Activated CD4-positive, alpha-beta T cell treated with anti-CD3 and anti-CD28 coated beads for 36 hours (primary cell): ENCODE measurements at regions of chr1 and their contacts with region 1.

Region 1: DNA sequence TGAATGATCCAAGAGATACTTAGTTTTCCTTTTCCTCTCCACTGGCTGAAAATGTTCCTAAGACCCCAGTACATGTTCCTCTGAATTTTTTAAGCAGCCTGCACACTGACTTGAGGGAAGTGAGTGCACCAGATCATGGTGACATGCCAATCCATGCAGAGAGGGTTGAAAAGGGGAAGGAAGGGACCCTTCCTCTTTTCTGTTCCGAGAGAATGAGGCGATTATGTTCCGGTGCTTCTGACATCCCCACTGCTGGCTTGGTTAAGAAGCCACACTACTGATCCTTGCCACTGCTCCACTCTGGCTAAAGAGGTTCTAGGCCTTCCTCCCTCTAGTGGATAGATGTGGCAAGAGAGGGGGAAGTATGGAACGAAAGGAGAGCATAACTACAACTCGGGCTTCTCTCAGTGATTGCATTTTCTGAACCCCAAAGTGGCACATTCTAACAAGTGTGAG is 1.8 kb upstream of the CYB5R1 start:
- DNase-seq: peak; percentile 51
- ATAC-seq: peak; percentile 65
- H3K4me3 Mint-ChIP-seq: no peak overlapping the region
- H3K27ac Mint-ChIP-seq: peak overlapping the region; percentile 16
- H3K4me1 Mint-ChIP-seq: peaks cover 27% of the 10 kb centered on the region
- H3K27me3 Mint-ChIP-seq: no peaks in the 10 kb centered on the region

Region 2: GRCh38 chr1:201955009-201955728 is 1013.7 kb before region 1 on chr1 and contains the start of gene TIMM17A:
- CTCF ChIA-PET with region 1: no interaction called
- POLR2A ChIA-PET with region 1: no interaction called
- intact Hi-C with region 1: loop called in 1 of 2 experiments (anchors 2 kb)
- DNase-seq: peak; percentile 97
- ATAC-seq: peak; percentile 100
- H3K4me3 Mint-ChIP-seq: peak within 1 kb of the TSS; percentile 99
- H3K27ac Mint-ChIP-seq: peak within 1 kb of the TSS; percentile 97
- H3K4me1 Mint-ChIP-seq: peaks cover 16% of the 10 kb centered on the region
- H3K27me3 Mint-ChIP-seq: no peaks in the 10 kb centered on the region
- total RNA-seq, gene TIMM17A: 51.9 to 70.6 TPM

Region 3: DNA sequence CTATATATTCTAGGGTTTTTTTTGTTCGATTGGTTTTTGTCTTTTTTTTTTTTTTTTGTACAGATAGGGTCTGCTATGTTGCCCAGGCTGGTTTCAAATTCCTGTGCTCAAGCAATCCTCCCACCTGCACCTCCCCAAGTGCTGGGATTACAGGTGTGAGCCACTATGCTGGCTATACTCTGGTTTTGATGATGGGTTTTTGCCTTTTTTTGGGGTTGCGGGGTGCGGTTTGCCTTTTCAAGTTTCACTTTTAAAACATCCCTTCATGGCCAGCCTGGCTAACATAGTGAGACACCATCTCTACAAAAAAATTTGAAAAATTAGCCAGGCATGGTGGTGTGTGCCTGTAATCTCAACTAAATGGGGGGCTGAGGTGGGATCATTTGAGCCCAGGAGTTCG is 170.6 kb before region 1 on chr1:
- CTCF ChIA-PET with region 1: no interaction called
- POLR2A ChIA-PET with region 1: no interaction called
- intact Hi-C with region 1: no loop called
- DNase-seq: peak; percentile 24
- ATAC-seq: peak; percentile 47
- H3K4me3 Mint-ChIP-seq: no peak overlapping the region
- H3K27ac Mint-ChIP-seq: no peak overlapping the region
- H3K4me1 Mint-ChIP-seq: peaks cover 46% of the 10 kb centered on the region
- H3K27me3 Mint-ChIP-seq: no peaks in the 10 kb centered on the region

Region 4: GRCh38 chr1:202888531-202889360 is 80.1 kb before region 1 on chr1 and contains the start of gene RABIF:
- CTCF ChIA-PET with region 1: interaction called, 8 read pairs
- POLR2A ChIA-PET with region 1: no interaction called
- intact Hi-C with region 1: loop called in 1 of 2 experiments (anchors 1 kb)
- DNase-seq: peak; percentile 98
- ATAC-seq: peak; percentile 94
- H3K4me3 Mint-ChIP-seq: peak within 1 kb of the TSS; percentile 91
- H3K27ac Mint-ChIP-seq: peak within 1 kb of the TSS; percentile 96
- H3K4me1 Mint-ChIP-seq: peaks cover 15% of the 10 kb centered on the region
- H3K27me3 Mint-ChIP-seq: no peaks in the 10 kb centered on the region
- total RNA-seq, gene RABIF: 6.8 to 7.4 TPM

Region 5: GRCh38 chr1:202941372-202941771 is 27.5 kb before region 1 on chr1:
- CTCF ChIA-PET with region 1: no interaction called
- POLR2A ChIA-PET with region 1: interaction called, 13 read pairs
- intact Hi-C with region 1: no loop called
- DNase-seq: no peak
- ATAC-seq: no peak
- H3K4me3 Mint-ChIP-seq: no peak overlapping the region
- H3K27ac Mint-ChIP-seq: no peak overlapping the region
- H3K4me1 Mint-ChIP-seq: no peaks in the 10 kb centered on the region
- H3K27me3 Mint-ChIP-seq: no peaks in the 10 kb centered on the region

Region 6: GRCh38 chr1:202957733-202958543 is 10.9 kb before region 1 on chr1 and contains the start of gene ADIPOR1:
- CTCF ChIA-PET with region 1: interaction called, 4 read pairs
- POLR2A ChIA-PET with region 1: no interaction called
- intact Hi-C with region 1: loop called (anchors 1 kb)
- DNase-seq: peak; percentile 96
- ATAC-seq: peak; percentile 100
- H3K4me3 Mint-ChIP-seq: peak within 1 kb of the TSS; percentile 83
- H3K27ac Mint-ChIP-seq: peak within 1 kb of the TSS; percentile 82
- H3K4me1 Mint-ChIP-seq: peaks cover 46% of the 10 kb centered on the region
- H3K27me3 Mint-ChIP-seq: no peaks in the 10 kb centered on the region
- total RNA-seq, gene ADIPOR1: 65.4 to 85.1 TPM

Region 7: DNA sequence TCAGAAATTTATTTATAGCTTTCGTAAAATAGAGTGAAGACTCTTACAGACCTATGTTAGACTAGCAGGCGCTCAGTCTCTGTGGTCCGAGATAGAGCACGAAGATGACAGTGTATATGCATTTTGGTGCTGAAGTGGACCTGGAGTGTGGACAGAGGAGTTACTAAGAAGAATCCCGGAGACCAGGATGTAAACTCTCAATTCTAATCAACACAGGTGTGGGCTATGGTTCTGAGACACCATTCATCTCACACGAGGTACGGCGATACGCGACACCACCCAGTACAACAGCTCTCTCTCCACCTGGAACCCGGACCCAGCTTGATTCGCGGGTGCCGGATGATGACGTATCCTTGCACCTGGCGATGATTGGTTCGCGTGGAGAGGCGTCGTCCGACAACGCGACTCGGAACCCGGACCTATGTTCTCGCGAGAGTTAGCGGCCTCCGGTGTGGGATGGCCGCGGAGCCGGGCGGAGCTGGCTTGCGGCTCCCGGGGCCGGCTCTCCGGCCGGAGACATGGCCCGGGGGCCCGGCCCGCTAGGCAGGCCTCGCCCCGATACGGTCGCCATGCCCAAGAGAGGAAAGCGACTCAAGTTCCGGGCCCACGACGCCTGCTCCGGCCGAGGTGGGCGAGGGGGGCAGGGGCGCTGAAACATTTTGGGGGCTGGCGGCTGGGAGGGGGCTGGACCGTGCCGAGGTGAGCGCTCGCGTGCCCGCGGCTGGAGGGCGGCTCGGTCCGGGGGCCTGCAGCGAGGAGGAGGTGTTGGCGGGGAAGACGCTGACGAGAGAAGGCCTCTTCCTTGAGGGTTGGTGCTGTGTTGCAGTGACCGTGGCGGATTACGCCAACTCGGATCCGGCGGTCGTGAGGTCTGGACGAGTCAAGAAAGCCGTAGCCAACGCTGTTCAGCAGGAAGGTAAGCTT is 38.3 kb after region 1 on chr1 and contains the start of gene TMEM183A:
- CTCF ChIA-PET with region 1: interaction called, 8 read pairs
- POLR2A ChIA-PET with region 1: interaction called, 6 read pairs
- intact Hi-C with region 1: loop called in 1 of 2 experiments (anchors 1 kb)
- DNase-seq: peak; percentile 98
- ATAC-seq: peak; percentile 96
- H3K4me3 Mint-ChIP-seq: peak within 1 kb of the TSS; percentile 99
- H3K27ac Mint-ChIP-seq: peak within 1 kb of the TSS; percentile 98
- H3K4me1 Mint-ChIP-seq: peaks cover 23% of the 10 kb centered on the region
- H3K27me3 Mint-ChIP-seq: no peaks in the 10 kb centered on the region
- total RNA-seq, gene TMEM183A: 68.6 to 71.0 TPM